ENCODE measurements at regions of chr2 and their contacts with region 1.

Region 1: DNA sequence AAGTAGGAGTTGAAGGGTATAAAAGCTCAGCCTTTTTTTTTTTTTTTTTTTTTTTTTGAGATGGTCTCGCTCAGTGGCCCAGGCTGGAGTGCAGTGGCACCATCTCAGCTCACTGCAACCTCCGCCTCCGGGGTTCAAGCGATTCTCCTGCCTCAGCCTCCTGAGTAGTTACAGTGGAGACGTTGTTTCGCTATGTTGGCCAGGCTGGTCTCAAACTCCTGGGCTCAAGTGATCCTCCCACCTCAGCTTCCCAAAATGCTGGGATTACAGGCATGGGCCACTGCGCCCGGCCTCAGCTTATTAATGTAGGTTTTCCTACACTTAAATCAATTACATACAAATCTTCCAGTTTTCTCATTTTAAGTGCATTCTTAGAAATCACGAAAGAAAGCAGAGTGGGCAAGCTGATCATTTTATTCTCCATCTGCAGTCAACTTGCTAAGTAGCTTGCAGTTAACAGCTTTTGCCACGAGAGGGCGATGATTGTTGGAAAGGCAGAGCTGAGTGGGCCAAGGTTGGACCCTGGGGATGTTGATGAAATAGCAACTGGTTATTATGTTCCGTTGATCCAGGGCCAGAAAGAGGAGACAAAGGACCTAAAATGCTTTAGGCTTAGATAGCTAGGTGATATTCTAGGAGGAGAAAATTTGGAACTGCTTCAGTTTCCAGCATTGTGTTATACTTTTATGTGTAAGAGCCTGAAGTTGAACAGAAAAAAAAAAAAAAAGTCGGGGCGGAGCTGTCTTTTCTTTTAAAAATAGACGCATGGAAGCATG is 234.4 kb upstream of the EPAS1 start:
- DNase-seq: peak; percentile 76 to 86
- ATAC-seq: peak; percentile 58 to 74; a peak in 5 of 6 replicates
- H3K4me3 ChIP-seq: no peak overlapping the region
- H3K27ac ChIP-seq: peak overlapping the region; percentile 65 to 91
- H3K4me1 ChIP-seq: peaks cover 51% of the 10 kb centered on the region
- CTCF ChIP-seq: peak; percentile 95
- EP300 ChIP-seq: no peak
- POLR2A ChIP-seq: no peak
- RAD21 ChIP-seq: peak; percentile 96 to 97

Region 2: GRCh38 chr2:46073540-46074018 is 10.8 kb after region 1 on chr2:
- CTCF ChIA-PET with region 1: interaction called, 20 read pairs
- POLR2A ChIA-PET with region 1: no interaction called
- DNase-seq: peak; percentile 80 to 89
- ATAC-seq: peak; percentile 91
- H3K4me3 ChIP-seq: peak overlapping the region; percentile 26
- H3K27ac ChIP-seq: peak overlapping the region; percentile 84 to 89
- H3K4me1 ChIP-seq: peaks cover 59% of the 10 kb centered on the region
- CTCF ChIP-seq: no peak
- EP300 ChIP-seq: peak; percentile 26 to 49; a peak in 2 of 5 replicates
- POLR2A ChIP-seq: no peak
- RAD21 ChIP-seq: peak; percentile 16 to 34; a peak in 3 of 5 replicates

Region 3: DNA sequence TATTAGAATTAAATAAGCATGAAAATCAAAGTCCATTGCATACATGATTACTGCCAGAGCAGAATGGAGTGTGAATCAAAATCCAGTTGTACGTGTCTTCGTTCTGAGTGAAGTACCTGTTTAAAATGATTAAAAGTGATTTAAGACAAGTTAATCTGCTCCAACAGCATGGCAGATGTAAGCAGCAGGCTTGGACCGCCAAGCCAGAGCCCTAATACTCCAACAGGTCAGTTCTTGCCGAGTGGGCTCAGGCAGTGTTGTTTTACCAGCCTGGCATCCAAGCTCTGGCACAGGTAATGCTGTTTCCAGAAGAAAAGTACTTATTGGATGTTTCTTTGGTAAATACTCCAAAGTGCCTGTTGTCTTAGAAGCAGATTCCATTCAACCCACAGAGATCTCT is 63.0 kb after region 1 on chr2:
- CTCF ChIA-PET with region 1: interaction called, 15 read pairs
- POLR2A ChIA-PET with region 1: no interaction called
- DNase-seq: no peak
- ATAC-seq: no peak
- H3K4me3 ChIP-seq: no peak overlapping the region
- H3K27ac ChIP-seq: peak overlapping the region in 1 of 2 experiments; percentile 15; a peak in 2 of 6 replicates
- H3K4me1 ChIP-seq: peaks cover 26% of the 10 kb centered on the region
- CTCF ChIP-seq: no peak
- EP300 ChIP-seq: no peak
- POLR2A ChIP-seq: no peak
- RAD21 ChIP-seq: no peak

Region 4: GRCh38 chr2:46164581-46165301 is 101.9 kb after region 1 on chr2:
- CTCF ChIA-PET with region 1: interaction called, 11 read pairs
- POLR2A ChIA-PET with region 1: no interaction called
- DNase-seq: peak; percentile 88 to 91
- ATAC-seq: peak; percentile 65 to 81
- H3K4me3 ChIP-seq: peak overlapping the region; percentile 1; the same call in 1 of the 3 replicates
- H3K27ac ChIP-seq: peak overlapping the region; percentile 85 to 89
- H3K4me1 ChIP-seq: peaks cover 77% of the 10 kb centered on the region
- CTCF ChIP-seq: no peak
- EP300 ChIP-seq: peak in 1 of 2 experiments; percentile 51; a peak in 2 of 5 replicates
- POLR2A ChIP-seq: no peak
- RAD21 ChIP-seq: peak in 1 of 2 experiments; percentile 42; a peak in 4 of 5 replicates

Region 5: DNA sequence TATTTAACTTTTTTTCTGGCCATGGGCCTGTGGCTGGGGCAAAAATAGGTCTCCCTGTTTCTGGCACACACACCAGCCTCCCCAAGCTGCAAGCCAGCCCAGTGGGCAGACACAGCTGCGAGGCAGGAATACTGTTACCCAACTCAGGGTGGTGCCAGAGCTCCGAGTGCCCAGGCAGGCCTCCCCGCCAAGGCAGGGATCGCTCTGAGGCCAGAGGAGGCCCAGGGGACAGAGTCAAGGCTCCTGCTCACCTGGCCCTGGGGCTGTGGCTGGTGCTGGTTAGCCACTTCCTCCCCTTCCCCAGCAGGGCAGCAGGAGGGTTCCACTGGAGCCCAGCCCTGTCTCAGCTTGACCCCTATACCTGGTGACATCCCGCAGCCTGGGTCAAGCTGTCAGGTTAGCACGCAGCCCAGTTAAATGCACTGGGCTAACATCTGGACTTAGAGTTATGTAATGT is 167.3 kb after region 1 on chr2:
- CTCF ChIA-PET with region 1: interaction called, 39 read pairs
- POLR2A ChIA-PET with region 1: interaction called, 6 read pairs
- DNase-seq: peak; percentile 35 to 84
- ATAC-seq: peak; percentile 85 to 90
- H3K4me3 ChIP-seq: no peak overlapping the region
- H3K27ac ChIP-seq: peak overlapping the region; percentile 93 to 95
- H3K4me1 ChIP-seq: peaks cover 62% of the 10 kb centered on the region
- CTCF ChIP-seq: peak; percentile 63
- EP300 ChIP-seq: no peak
- POLR2A ChIP-seq: no peak
- RAD21 ChIP-seq: peak; percentile 80 to 87

Region 6: DNA sequence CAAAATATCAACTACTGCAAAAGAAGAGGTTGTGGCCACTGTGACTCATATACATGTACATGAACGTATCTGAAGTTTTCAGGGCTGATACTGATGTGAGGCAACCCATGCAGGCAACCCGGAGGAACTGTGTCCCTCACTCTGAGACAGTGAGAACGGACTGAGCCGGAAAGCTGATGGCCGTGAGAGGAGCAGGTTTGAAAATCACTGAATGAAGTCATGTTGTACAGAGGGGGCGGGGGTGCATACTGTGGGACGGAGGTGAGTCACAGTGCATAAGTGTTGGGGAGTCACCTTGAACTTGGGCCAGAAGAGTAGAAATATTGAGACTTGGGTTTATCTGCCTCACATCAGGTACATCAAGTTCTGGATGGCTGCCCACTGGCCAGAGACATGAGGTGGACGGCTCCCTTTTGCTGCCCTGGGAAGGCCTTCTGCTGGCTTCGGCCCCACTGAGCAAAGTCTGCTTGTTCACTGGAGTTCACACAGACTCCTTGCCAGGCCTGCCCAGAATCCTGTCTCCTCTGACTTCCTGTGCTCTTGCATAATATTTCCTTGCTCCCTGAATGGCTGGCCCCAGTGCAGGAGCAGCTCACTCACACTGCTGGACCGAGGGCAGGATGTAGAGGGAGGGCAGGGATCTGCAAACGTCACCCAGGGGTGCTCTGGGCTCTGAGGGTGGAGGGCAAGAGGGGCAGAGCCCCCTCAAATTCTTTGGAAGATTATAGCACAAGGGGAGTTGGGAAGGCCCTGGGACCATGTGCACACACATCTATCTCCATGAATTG is 252.5 kb after region 1 on chr2:
- CTCF ChIA-PET with region 1: interaction called, 19 read pairs
- POLR2A ChIA-PET with region 1: interaction called, 3 read pairs
- DNase-seq: peak; percentile 95 to 98
- ATAC-seq: peak; percentile 90 to 94
- H3K4me3 ChIP-seq: peak overlapping the region; percentile 18; the same call in 2 of the 3 replicates
- H3K27ac ChIP-seq: peak overlapping the region; percentile 85 to 92
- H3K4me1 ChIP-seq: peaks cover 95% of the 10 kb centered on the region
- CTCF ChIP-seq: no peak
- EP300 ChIP-seq: peak; percentile 87 to 92; a peak in 3 of 5 replicates
- POLR2A ChIP-seq: 0 out of 2 replicates have a peak, but pooled peaks have one; percentile 3
- RAD21 ChIP-seq: peak; percentile 23 to 68; a peak in 4 of 5 replicates

Region 7: GRCh38 chr2:46461011-46461674 is 398.3 kb after region 1 on chr2:
- CTCF ChIA-PET with region 1: interaction called, 14 read pairs
- POLR2A ChIA-PET with region 1: no interaction called
- DNase-seq: peak; percentile 66 to 76
- ATAC-seq: peak; percentile 40 to 78; a peak in 4 of 6 replicates
- H3K4me3 ChIP-seq: no peak overlapping the region
- H3K27ac ChIP-seq: peak overlapping the region; percentile 29 to 79
- H3K4me1 ChIP-seq: peaks cover 16% of the 10 kb centered on the region
- CTCF ChIP-seq: peak; percentile 98
- EP300 ChIP-seq: no peak
- POLR2A ChIP-seq: no peak
- RAD21 ChIP-seq: peak; percentile 100